ENCODE measurements at regions of chr6 and their contacts with region 1.

Region 1: GRCh38 chr6:2353412-2354137 is 108.2 kb upstream of the GMDS start:
- DNase-seq: peak; percentile 7
- H3K4me3 Mint-ChIP-seq: no peak overlapping the region
- H3K27ac Mint-ChIP-seq: no peak overlapping the region
- H3K4me1 Mint-ChIP-seq: no peaks in the 10 kb centered on the region
- H3K27me3 Mint-ChIP-seq: peaks cover 2% of the 10 kb centered on the region

Region 2: GRCh38 chr6:1596088-1596852 is 757.3 kb before region 1 on chr6:
- intact Hi-C with region 1: loop called (anchors 1 kb)
- DNase-seq: peak; percentile 50
- H3K4me3 Mint-ChIP-seq: no peak overlapping the region
- H3K27ac Mint-ChIP-seq: no peak overlapping the region
- H3K4me1 Mint-ChIP-seq: peaks cover 4% of the 10 kb centered on the region
- H3K27me3 Mint-ChIP-seq: peaks cover 55% of the 10 kb centered on the region

Region 3: GRCh38 chr6:1604158-1605030 is 749.2 kb before region 1 on chr6:
- intact Hi-C with region 1: loop called (anchors 1 kb)
- DNase-seq: peak; percentile 37
- H3K4me3 Mint-ChIP-seq: no peak overlapping the region
- H3K27ac Mint-ChIP-seq: no peak overlapping the region
- H3K4me1 Mint-ChIP-seq: peaks cover 13% of the 10 kb centered on the region
- H3K27me3 Mint-ChIP-seq: peaks cover 84% of the 10 kb centered on the region

Region 4: DNA sequence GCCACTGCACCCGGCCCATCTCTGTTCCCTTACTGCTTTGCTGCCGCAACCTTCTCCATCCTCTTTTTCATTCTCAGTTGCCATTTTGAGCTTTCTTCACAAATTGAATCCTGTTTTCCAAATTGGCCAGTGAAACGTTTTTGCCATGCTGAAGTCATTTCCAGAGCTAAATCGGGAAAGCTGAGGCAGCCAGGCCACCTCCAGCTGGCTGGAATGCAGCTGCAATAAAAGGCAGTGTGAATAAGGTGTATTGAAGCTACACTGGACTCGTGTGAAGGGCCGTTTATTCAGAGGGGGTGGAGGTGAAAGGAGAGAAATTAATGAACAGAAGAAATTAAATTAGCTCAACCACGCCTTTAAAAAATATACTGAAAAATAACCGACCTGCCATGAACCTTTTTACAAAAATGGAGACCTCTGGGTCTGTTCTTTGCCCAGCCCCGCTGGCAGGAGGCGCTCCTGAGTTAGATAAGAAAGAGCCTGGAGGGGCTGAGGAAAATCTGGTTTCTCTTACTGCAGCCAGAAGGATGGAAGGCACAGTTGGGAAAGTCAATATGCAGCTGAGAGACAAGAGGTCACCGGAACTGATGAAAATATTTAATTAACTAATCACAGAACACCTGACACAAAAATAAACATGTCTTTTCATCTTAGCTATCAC is 460.0 kb before region 1 on chr6:
- intact Hi-C with region 1: loop called (anchors 5 kb)
- DNase-seq: no peak
- H3K4me3 Mint-ChIP-seq: no peak overlapping the region
- H3K27ac Mint-ChIP-seq: no peak overlapping the region
- H3K4me1 Mint-ChIP-seq: peaks cover 12% of the 10 kb centered on the region
- H3K27me3 Mint-ChIP-seq: no peaks in the 10 kb centered on the region

Region 5: GRCh38 chr6:2103644-2104523 is 249.7 kb before region 1 on chr6:
- intact Hi-C with region 1: loop called (anchors 1 kb)
- DNase-seq: no peak
- H3K4me3 Mint-ChIP-seq: no peak overlapping the region
- H3K27ac Mint-ChIP-seq: no peak overlapping the region
- H3K4me1 Mint-ChIP-seq: peaks cover 6% of the 10 kb centered on the region
- H3K27me3 Mint-ChIP-seq: peaks cover 2% of the 10 kb centered on the region

Region 6: DNA sequence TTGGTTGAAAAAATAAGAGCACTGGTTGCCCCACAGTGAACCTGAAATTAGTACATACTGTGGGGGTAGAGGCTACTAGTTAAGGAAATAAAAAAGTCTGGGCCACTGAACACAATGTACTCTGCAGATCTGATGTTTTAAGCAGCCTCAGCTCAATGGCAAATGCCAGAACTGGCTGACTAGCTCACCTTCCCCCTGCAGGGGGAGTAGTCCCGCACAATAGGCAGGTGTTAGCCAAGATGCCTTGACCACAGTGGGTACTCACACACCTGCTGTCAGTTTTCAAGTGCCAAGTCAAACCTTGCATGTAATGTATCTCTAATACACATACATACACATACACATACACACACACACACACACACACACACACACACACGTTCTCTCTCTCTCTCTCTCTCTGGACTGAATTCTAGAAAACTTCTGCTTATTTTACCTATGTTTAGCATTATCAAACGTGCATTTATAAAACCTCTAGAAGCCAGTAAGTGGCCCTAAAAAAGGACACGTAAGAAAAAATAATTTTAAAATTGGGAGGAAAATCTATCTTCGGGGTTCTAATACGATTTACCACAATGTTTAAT is 144.3 kb before region 1 on chr6:
- intact Hi-C with region 1: loop called (anchors 1 kb)
- DNase-seq: peak; percentile 11
- H3K4me3 Mint-ChIP-seq: no peak overlapping the region
- H3K27ac Mint-ChIP-seq: no peak overlapping the region
- H3K4me1 Mint-ChIP-seq: no peaks in the 10 kb centered on the region
- H3K27me3 Mint-ChIP-seq: peaks cover 2% of the 10 kb centered on the region

Measured in activated T-helper 1 cell treated with anti-CD3 and anti-CD28 coated beads, Interleukin-12 subunit alpha, Interleukin-12 subunit beta, Interleukin-2, Interleukin-4 antibody, amounts not matched to agents 30 ng/mL and 10 ng/mL and 1 ng/mL, durations not matched to agents 14 hours and 24 hours and 36 hours (primary cell).